ENCODE measurements at regions of chr16 and their contacts with region 1.

Region 1: DNA sequence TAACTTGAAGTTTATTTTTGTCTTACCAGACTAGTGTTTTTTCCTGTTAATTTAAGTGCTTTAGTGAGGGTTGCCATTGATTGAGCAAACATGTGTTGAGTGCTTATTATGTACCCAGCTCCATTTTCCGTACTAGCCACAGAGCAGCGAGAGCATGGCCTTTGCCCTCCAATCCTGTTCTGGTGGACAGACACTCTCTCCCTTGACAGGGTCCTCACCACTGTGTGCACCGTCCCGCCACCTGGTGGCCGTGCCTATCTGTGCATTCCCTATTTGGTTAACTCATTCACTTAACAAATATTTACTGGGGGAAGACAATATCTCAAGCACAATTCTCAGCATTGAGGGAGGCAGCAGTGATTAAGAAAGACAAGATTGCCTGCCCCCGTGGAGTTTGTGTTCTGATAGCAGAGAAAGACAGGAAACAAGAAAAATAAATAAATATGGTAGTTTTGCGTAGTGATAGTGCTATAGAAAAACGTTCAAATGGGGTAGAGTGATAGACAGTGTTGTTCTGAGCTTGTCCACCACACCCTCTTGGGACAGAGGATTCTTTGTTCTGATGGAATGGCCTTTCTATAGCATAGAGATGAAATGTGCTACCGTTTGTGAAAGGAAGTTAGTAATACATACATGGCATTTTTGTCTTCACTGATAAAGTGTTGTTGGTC is 13.0 kb downstream of the CDH13 start:
- DNase-seq: peak; percentile 11 to 66 (median 63)
- H3K4me3 ChIP-seq: no peak overlapping the region
- H3K27ac ChIP-seq: no peak overlapping the region
- H3K27me3 ChIP-seq: peaks cover 0 to 3% (median 0%) of the 10 kb centered on the region in 45 donors
- CTCF ChIP-seq: peak; percentile 28 to 85 (median 70)

Region 2: GRCh38 chr16:82280867-82281266 is 358.9 kb before region 1 on chr16:
- intact Hi-C with region 1: no loop called
- DNase-seq: no peak
- H3K4me3 ChIP-seq: no peak overlapping the region
- H3K27ac ChIP-seq: no peak overlapping the region
- H3K27me3 ChIP-seq: no peaks in the 10 kb centered on the region
- CTCF ChIP-seq: no peak

Region 3: DNA sequence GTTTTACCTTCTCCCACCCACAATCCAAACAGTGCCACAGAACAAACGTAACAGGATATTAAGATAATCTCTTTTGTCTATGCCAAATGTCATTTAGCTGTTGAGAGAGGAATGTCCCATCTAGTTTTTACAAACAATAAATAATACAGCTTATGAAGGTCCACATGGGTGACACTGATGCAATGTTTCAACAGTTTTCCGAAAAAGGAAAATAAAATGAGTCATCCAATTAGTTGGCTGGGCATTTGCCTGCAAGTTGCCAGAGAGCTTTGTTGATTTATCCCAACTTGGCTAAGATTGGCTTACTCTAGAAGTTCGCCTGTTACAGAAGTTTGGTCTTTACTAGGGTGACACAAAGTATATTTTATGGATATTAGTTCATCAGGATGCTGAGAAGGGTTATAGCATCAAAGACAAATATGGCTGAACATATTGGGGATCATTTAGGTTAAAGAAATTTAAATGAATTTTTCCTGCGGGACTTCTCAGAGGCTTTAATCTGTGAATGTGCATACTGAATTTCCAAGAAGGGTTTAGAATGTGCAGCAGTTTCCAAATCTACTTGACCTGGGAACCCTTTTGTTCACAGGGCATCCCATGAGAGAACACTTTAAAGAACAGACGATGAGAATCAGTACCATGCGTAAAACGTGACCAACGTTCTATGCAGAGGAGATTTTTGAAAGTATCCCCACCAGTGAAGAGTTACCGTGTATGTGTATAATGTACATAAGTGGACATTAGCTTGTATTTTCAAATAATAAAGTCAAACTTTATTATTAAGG is 60.1 kb after region 1 on chr16:
- intact Hi-C with region 1: loop called in 1 of 2 experiments (anchors 5 kb)
- DNase-seq: peak in 1 of 10 donors; percentile 14
- H3K4me3 ChIP-seq: no peak overlapping the region
- H3K27ac ChIP-seq: peak overlapping the region in 42 of 59 donors; percentile 2 to 81 (median 54)
- H3K27me3 ChIP-seq: peaks cover 0 to 2% (median 0%) of the 10 kb centered on the region in 45 donors
- CTCF ChIP-seq: peak in 1 of 56 donors; percentile 27

Region 4: GRCh38 chr16:82801361-82801760 is 161.6 kb after region 1 on chr16:
- intact Hi-C with region 1: loop called in 1 of 2 experiments (anchors 10 kb)
- DNase-seq: no peak
- H3K4me3 ChIP-seq: no peak overlapping the region
- H3K27ac ChIP-seq: no peak overlapping the region
- H3K27me3 ChIP-seq: no peaks in the 10 kb centered on the region
- CTCF ChIP-seq: no peak

Region 5: DNA sequence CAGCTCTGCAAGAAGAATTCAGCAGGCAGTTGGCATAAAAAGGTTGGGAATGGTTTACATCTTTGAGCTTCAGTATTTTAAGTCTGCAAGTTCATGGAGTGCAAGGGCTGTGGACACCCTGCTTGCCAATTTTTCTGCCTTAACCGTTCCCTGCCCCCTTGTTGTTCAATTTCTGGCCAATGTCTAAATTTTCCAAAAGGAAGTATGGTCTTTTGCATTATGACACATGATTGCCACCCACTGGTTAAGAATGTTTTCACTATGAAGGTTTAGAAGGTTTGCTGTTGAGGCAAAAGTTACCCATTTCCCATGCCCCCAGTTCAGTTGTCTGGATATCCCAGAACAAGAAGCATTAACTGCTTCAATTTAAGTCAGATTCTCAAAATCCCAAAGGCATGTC is 428.9 kb after region 1 on chr16:
- intact Hi-C with region 1: loop called in 1 of 2 experiments (anchors 10 kb)
- DNase-seq: no peak
- H3K4me3 ChIP-seq: no peak overlapping the region
- H3K27ac ChIP-seq: no peak overlapping the region
- H3K27me3 ChIP-seq: no peaks in the 10 kb centered on the region
- CTCF ChIP-seq: peak in 30 of 56 donors; percentile 3 to 43 (median 30)

Region 6: DNA sequence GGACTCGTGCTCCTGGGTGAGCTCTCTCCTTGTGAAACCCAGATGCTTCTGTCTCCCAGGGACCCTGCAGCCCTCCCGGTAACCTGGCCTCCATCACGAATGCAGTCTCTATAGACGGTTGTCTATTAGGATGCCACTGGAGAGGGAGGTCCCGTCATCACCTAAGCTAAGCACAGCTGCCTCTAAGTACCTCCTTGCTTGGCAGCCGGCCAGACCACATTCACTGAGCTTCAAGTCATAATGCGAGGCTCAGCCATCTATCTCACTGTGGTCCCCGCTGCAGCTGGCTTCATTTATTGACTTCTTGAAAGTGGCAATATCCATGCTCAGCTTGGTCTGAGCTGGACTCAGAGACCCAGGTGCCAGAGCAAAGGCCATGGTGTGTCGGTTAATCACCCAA is 1093.5 kb after region 1 on chr16:
- intact Hi-C with region 1: no loop called
- DNase-seq: no peak
- H3K4me3 ChIP-seq: no peak overlapping the region
- H3K27ac ChIP-seq: no peak overlapping the region
- H3K27me3 ChIP-seq: no peaks in the 10 kb centered on the region
- CTCF ChIP-seq: no peak

Measured in dorsolateral prefrontal cortex (tissue), 120 donors.